Stomach (tissue), 19 donors: ENCODE measurements at regions of chr1 and their contacts with region 1.

Region 1: DNA sequence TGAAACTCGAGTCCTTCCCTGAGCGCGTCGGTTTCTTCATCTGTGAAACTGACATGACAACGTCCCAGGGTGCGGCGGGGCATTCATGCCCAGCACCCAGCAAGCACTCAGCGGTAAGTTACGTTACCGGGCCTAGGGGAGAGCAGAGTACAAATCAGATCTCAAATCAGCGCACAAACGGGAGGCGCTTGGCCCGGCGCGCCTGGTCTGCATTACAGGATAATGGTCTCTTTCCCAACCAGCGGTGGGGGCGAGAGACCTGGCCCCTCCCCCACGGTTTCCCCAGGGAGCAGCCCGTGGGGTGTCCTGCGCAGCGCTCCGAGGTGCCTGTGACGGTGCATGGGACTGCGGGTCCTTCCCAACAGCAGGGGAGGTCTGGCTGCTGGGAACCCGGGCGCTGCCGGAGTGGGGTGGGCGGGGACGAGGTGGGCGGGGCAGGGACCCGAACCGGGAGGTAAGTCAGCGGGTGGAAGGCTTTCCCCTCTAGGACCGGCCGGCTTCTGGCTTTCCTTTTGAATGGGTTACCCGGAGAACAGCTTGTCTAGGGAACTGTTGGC is 1.0 kb downstream of the TMEM51 start:
- DNase-seq: peak; percentile 49 to 80
- H3K4me3 ChIP-seq: peak overlapping the region; percentile 60 to 95 (median 80)
- H3K27ac ChIP-seq: peak overlapping the region; percentile 94 to 99 (median 98)
- H3K4me1 ChIP-seq: peaks cover 62 to 80% (median 75%) of the 10 kb centered on the region in 4 donors
- H3K27me3 ChIP-seq: peaks cover 0 to 28% (median 8%) of the 10 kb centered on the region in 3 donors
- CTCF ChIP-seq: no peak
- EP300 ChIP-seq: no peak
- POLR2A ChIP-seq: no peak

Region 2: GRCh38 chr1:14881775-14882672 is 272.5 kb before region 1 on chr1:
- intact Hi-C with region 1: no loop called
- DNase-seq: peak; percentile 20 to 34
- H3K4me3 ChIP-seq: no peak overlapping the region
- H3K27ac ChIP-seq: peak overlapping the region in 4 of 5 donors; percentile 58 to 70 (median 64)
- H3K4me1 ChIP-seq: peaks cover 15 to 21% (median 18%) of the 10 kb centered on the region in 4 donors
- H3K27me3 ChIP-seq: no peaks in the 10 kb centered on the region
- CTCF ChIP-seq: no peak
- EP300 ChIP-seq: no peak
- POLR2A ChIP-seq: no peak

Region 3: GRCh38 chr1:15106608-15107007 is 48.0 kb before region 1 on chr1:
- intact Hi-C with region 1: no loop called
- DNase-seq: peak; percentile 58 to 63
- H3K4me3 ChIP-seq: no peak overlapping the region
- H3K27ac ChIP-seq: no peak overlapping the region
- H3K4me1 ChIP-seq: no peaks in the 10 kb centered on the region
- H3K27me3 ChIP-seq: peaks cover 0 to 23% (median 0%) of the 10 kb centered on the region in 3 donors
- CTCF ChIP-seq: no peak
- EP300 ChIP-seq: no peak
- POLR2A ChIP-seq: no peak

Region 4: DNA sequence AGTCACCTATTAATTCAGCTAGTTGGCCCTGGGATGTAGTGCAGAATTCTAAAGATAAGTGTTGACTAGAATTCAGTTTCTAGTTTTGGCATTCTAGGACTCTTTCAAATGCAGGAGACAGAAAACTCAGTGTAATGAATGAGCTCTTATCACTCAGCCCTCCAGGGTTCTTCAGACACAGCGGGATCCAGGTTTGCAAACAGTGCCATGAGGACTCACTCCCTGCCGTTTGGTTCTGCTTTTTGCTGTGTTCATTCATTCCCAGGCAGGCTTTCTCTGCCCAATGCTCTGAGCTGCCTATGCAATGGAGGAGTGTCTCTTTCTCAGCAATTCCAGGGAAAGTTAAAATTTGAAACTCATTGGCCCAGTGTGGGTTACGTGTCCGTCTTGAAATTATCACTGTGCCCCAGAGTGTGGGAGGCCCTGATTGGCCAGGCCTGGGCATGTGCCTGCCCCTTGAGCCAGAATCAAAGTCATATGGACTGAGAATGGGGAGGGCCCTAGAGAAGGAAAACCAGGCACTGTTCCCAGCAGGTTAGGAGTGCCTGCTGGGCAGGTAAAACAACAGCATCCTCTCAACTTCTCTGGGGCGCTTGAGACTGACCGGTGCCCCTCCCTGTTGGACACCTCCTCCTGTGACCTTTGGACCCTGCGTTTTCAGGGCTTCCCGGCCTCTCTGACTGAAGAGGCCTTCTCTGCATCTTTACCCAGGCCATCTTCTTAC is 42.4 kb after region 1 on chr1:
- intact Hi-C with region 1: loop called (anchors 5 kb)
- DNase-seq: peak; percentile 69 to 79
- H3K4me3 ChIP-seq: no peak overlapping the region
- H3K27ac ChIP-seq: peak overlapping the region; percentile 73 to 95 (median 89)
- H3K4me1 ChIP-seq: peaks cover 49 to 85% (median 66%) of the 10 kb centered on the region in 4 donors
- H3K27me3 ChIP-seq: no peaks in the 10 kb centered on the region
- CTCF ChIP-seq: no peak
- EP300 ChIP-seq: no peak
- POLR2A ChIP-seq: no peak